Mammary epithelial cell (primary cell): ENCODE measurements at regions of chr17 and their contacts with region 1.

Region 1: DNA sequence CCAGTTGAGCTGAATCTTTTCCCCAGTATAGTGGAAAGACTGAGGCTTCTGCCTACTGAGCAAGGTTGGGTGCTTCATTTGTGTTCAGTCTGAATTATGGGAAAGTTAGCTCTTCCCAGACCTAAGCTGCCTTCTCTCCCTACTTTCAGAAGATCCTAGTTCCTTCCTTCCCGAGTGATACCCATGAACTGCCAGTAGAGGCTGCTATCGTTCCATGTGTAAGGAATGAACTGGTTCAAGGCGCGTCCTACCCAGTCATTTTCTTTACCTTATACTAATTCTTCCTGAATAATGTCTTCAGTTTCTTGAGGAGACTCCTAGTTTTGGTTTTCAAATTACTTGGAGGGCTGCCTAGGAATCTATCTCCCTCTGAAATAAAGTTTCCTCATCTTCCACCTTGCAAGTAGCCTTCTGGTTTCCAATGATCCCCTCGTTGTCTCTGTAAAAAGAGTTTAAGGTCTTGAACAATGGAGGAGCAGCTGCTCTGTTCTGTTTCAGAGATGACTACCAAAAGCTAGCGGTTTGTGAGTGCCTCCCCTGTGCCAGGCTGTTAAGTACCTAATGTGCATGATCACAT is 934 bp upstream of the AOC2 start:
- DNase-seq: peak; percentile 42
- H3K4me3 ChIP-seq: no peak overlapping the region
- H3K27ac ChIP-seq: no peak overlapping the region
- H3K4me1 ChIP-seq: peaks cover 6% of the 10 kb centered on the region
- H3K27me3 ChIP-seq: no peaks in the 10 kb centered on the region
- CTCF ChIP-seq: peak; percentile 98

Region 2: DNA sequence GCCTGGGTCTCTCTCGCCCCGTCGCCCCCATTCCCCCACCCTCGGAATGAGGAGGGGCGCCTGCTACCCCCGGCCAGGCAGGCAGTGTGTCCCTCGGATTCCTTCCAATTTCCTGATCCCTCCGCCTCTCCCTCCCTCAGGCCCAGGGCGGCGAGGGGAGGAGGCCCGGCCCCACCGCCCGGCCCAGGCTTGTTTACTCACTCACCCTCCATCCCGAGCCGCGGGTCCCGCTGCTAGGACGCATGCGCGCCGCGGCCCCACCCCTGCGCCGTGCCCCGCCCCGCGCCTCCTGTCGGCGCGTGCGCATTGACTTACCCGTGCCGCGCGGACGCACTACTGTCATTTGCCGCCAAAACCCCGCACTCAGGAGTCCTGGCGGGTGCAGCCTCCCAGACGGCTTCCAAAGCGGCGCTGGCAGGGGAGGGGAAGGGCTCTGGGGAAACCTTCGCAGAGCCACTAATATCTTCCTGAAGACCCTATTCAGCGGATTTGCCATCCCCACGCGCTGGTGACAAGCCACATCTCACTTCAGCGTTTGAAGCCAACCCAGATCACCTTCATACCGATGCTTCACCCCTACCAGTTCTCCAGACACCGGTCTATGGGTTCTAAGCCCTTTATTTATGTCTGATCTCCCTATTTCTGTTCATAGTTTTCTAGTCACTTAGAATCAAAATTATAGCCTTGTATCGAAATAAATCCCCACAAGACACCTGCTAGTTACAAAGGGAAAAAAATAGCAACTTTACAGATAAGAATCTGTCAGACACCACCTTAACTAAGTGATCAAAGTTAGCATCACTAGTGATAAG is 98.4 kb before region 1 on chr17 and contains the start of gene EZH1:
- CTCF ChIA-PET with region 1: no interaction called
- dilution Hi-C with region 1: no loop called
- in situ Hi-C with region 1: no loop called
- intact Hi-C with region 1: no loop called
- DNase-seq: peak; percentile 88
- H3K4me3 ChIP-seq: peak within 1 kb of the TSS; percentile 71 to 93 (median 77)
- H3K27ac ChIP-seq: peak within 1 kb of the TSS; percentile 60
- H3K4me1 ChIP-seq: peaks cover 13% of the 10 kb centered on the region
- H3K27me3 ChIP-seq: no peaks in the 10 kb centered on the region
- CTCF ChIP-seq: no peak
- total RNA-seq, gene EZH1: 17.8 to 21.3 TPM

Region 3: GRCh38 chr17:42928714-42929496 is 85.5 kb after region 1 on chr17:
- CTCF ChIA-PET with region 1: no interaction called
- dilution Hi-C with region 1: no loop called
- in situ Hi-C with region 1: no loop called
- intact Hi-C with region 1: loop called (anchors 2 kb)
- DNase-seq: peak; percentile 64
- H3K4me3 ChIP-seq: no peak overlapping the region
- H3K27ac ChIP-seq: no peak overlapping the region
- H3K4me1 ChIP-seq: no peaks in the 10 kb centered on the region
- H3K27me3 ChIP-seq: no peaks in the 10 kb centered on the region
- CTCF ChIP-seq: peak; percentile 35 to 43